CD4-positive, alpha-beta memory T cell (primary cell): ENCODE measurements at regions of chr3 and their contacts with region 1.

Region 1: DNA sequence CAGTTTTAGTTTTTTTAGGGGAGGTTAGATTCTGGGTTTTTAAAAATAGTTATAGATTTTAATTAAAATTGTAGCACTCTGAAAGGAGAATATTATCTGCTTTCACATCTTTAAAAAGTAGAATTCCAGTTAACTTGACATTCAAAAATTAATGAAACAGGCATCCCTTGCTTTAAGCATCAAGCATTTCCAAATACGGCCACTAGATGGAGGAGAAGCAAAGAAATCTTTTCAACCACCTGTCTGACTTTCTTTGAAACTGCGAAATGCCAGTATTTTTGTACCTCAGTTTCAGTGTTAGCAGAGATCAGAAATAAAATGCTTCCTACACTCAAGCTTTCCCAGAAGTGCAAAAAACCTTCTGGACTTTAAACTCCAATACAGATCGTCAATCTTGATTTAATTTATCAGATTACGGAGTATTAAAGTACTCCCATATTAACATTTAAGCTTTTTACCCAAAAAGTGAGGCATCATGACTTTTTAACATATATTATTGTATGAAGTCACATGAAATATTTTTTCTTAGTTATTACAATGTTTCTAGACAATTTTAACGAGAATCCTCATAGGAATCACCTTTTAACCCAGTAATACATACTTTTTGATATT is 153.3 kb downstream of the P3H2 start:
- DNase-seq: peak in 4 of 5 donors; percentile 16 to 43 (median 34)
- H3K4me3 ChIP-seq: no peak overlapping the region
- H3K4me3 Mint-ChIP-seq: no peak overlapping the region
- H3K27ac ChIP-seq: no peak overlapping the region
- H3K27ac Mint-ChIP-seq: no peak overlapping the region
- H3K4me1 ChIP-seq: no peaks in the 10 kb centered on the region
- H3K4me1 Mint-ChIP-seq: peaks cover 0 to 2% (median 0%) of the 10 kb centered on the region in 4 donors
- H3K27me3 ChIP-seq: no peaks in the 10 kb centered on the region
- H3K27me3 Mint-ChIP-seq: peaks cover 0 to 4% of the 10 kb centered on the region in 2 donors

Region 2: DNA sequence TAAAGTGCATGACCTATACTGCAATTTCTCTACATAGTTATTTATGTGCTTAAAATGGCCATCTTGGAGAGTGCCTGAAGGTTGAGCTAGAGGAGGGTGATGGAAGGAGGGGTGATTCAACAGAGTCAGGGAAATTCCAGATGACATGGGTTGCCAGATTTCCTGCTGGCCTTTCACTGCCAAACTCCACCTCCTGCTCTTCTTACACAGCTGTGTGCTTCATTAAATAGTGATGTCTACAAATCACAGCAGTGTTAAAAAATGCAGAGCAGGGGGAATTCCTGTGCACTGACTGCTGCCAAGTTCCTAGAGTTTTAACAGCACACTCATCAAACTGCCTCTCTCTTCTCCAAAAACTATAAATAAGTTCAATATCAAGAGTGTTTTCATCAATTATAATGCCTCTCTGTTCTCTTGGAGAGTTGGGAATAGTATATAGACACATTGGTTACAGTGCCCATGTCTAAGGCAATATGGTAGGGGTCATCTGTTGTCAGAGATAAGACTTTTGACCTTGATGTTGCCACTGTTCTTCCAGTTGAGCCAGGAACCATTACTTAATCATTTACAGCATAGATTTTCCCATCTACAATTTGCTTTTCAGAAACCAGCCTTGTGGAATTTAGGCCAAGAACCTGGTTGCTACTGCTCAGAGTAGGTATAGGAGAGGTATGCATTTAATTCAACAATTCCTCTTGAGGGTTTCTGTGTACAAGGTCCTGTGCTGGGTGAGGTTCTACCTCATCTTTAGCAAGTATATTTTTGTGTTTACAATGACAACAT is 256.5 kb before region 1 on chr3:
- CTCF ChIA-PET with region 1: no interaction called
- POLR2A ChIA-PET with region 1: no interaction called
- intact Hi-C with region 1: no loop called
- DNase-seq: no peak
- H3K4me3 ChIP-seq: no peak overlapping the region
- H3K4me3 Mint-ChIP-seq: no peak overlapping the region
- H3K27ac ChIP-seq: no peak overlapping the region
- H3K27ac Mint-ChIP-seq: no peak overlapping the region
- H3K4me1 ChIP-seq: peaks cover 14% of the 10 kb centered on the region
- H3K4me1 Mint-ChIP-seq: peaks cover 12 to 19% (median 17%) of the 10 kb centered on the region in 4 donors
- H3K27me3 ChIP-seq: no peaks in the 10 kb centered on the region
- H3K27me3 Mint-ChIP-seq: no peaks in the 10 kb centered on the region

Region 3: GRCh38 chr3:189797103-189797750 is 170.1 kb before region 1 on chr3:
- CTCF ChIA-PET with region 1: no interaction called
- POLR2A ChIA-PET with region 1: no interaction called
- intact Hi-C with region 1: no loop called
- DNase-seq: no peak
- H3K4me3 ChIP-seq: no peak overlapping the region
- H3K4me3 Mint-ChIP-seq: no peak overlapping the region
- H3K27ac ChIP-seq: no peak overlapping the region
- H3K27ac Mint-ChIP-seq: no peak overlapping the region
- H3K4me1 ChIP-seq: no peaks in the 10 kb centered on the region
- H3K4me1 Mint-ChIP-seq: peaks cover 0 to 4% (median 0%) of the 10 kb centered on the region in 4 donors
- H3K27me3 ChIP-seq: no peaks in the 10 kb centered on the region
- H3K27me3 Mint-ChIP-seq: peaks cover 0 to 1% of the 10 kb centered on the region in 2 donors

Region 4: DNA sequence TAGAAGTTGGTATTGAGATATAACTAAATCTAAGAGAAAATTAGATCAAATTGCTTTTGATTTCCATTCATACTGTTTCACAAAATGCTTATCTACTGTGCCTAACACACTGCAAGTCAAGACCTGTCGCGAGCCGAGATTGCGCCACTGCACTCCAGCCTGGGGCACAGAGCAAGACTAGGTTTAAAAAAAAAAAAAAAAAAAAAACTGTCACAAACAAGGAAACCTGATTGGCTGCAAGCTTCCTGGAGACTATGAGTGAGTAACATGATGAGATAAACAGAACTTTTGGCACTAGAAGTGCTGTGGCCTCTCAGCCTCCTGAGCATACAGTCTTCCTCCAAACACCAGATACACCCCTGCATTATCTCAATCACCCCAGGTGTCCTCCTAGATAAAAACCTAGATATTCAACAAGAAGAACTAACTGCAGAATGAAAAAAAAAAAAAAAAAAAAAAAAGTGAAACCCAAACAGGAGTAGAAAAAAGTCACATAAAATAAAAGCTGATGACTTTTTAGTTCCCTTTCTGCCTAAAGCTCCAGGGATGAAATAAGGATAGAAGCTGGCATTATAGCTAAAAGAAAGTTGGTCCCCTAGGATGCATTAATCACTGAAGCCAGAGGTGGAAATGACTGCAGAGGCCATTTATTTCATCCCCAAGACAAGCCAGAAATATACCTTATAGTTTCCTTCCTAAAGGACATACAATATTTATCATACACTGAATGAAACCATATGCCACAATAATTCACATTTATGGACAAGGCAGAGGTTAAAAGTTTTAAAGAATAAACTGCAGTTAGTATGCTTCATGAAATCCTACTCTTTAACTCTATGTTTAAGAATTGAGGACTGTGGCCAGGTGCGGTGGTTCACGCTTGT is 70.9 kb after region 1 on chr3:
- CTCF ChIA-PET with region 1: no interaction called
- POLR2A ChIA-PET with region 1: no interaction called
- intact Hi-C with region 1: no loop called
- DNase-seq: no peak
- H3K4me3 ChIP-seq: no peak overlapping the region
- H3K4me3 Mint-ChIP-seq: no peak overlapping the region
- H3K27ac ChIP-seq: no peak overlapping the region
- H3K27ac Mint-ChIP-seq: no peak overlapping the region
- H3K4me1 ChIP-seq: no peaks in the 10 kb centered on the region
- H3K4me1 Mint-ChIP-seq: no peaks in the 10 kb centered on the region
- H3K27me3 ChIP-seq: no peaks in the 10 kb centered on the region
- H3K27me3 Mint-ChIP-seq: peaks cover 6% of the 10 kb centered on the region in 2 donors

Region 5: DNA sequence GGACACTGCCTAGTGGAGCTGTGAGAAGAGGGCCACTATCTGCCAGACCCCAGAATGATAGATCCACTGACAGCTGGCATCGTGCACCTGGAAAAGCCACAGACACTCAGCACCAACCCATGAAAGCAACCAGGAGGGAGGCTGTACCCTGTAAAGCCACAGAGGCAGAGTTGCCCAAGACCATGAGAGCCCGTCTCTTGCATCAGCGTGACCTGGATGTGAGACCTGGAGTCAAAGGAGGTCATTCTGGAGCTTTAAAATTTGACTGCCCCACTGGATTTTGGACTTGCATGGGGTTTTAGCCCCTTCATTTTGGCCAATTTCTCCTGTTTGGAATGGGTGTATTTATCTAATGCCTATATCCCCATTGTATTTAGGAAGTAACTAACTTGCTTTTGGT is 236.8 kb after region 1 on chr3:
- CTCF ChIA-PET with region 1: interaction called, 3 read pairs
- POLR2A ChIA-PET with region 1: no interaction called
- intact Hi-C with region 1: loop called (anchors 5 kb)
- DNase-seq: no peak
- H3K4me3 ChIP-seq: no peak overlapping the region
- H3K4me3 Mint-ChIP-seq: no peak overlapping the region
- H3K27ac ChIP-seq: no peak overlapping the region
- H3K27ac Mint-ChIP-seq: no peak overlapping the region
- H3K4me1 ChIP-seq: no peaks in the 10 kb centered on the region
- H3K4me1 Mint-ChIP-seq: peaks cover 0 to 1% (median 0%) of the 10 kb centered on the region in 4 donors
- H3K27me3 ChIP-seq: no peaks in the 10 kb centered on the region
- H3K27me3 Mint-ChIP-seq: peaks cover 5 to 9% of the 10 kb centered on the region in 2 donors

Region 6: DNA sequence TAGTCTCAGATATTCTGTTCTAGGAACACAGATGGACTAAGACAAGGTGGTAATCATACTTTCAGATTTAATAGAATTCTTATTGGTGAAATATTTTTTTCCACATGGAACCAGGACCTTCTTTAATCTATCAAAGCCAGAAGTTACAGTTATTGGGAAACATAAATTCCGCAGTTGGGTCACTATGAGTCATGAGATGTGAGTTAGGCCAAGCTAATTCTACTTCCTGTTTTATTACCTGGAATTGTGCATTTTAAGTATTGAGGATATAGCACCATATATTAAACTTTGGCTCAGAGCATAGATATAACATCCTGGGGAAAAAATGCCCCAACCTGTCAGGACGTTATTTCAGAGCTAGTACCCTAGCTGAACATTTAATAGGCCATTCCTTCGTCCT is 249.7 kb after region 1 on chr3:
- CTCF ChIA-PET with region 1: no interaction called
- POLR2A ChIA-PET with region 1: no interaction called
- intact Hi-C with region 1: no loop called
- DNase-seq: no peak
- H3K4me3 ChIP-seq: no peak overlapping the region
- H3K4me3 Mint-ChIP-seq: no peak overlapping the region
- H3K27ac ChIP-seq: no peak overlapping the region
- H3K27ac Mint-ChIP-seq: no peak overlapping the region
- H3K4me1 ChIP-seq: no peaks in the 10 kb centered on the region
- H3K4me1 Mint-ChIP-seq: no peaks in the 10 kb centered on the region
- H3K27me3 ChIP-seq: no peaks in the 10 kb centered on the region
- H3K27me3 Mint-ChIP-seq: peaks cover 0 to 1% of the 10 kb centered on the region in 2 donors

Region 7: DNA sequence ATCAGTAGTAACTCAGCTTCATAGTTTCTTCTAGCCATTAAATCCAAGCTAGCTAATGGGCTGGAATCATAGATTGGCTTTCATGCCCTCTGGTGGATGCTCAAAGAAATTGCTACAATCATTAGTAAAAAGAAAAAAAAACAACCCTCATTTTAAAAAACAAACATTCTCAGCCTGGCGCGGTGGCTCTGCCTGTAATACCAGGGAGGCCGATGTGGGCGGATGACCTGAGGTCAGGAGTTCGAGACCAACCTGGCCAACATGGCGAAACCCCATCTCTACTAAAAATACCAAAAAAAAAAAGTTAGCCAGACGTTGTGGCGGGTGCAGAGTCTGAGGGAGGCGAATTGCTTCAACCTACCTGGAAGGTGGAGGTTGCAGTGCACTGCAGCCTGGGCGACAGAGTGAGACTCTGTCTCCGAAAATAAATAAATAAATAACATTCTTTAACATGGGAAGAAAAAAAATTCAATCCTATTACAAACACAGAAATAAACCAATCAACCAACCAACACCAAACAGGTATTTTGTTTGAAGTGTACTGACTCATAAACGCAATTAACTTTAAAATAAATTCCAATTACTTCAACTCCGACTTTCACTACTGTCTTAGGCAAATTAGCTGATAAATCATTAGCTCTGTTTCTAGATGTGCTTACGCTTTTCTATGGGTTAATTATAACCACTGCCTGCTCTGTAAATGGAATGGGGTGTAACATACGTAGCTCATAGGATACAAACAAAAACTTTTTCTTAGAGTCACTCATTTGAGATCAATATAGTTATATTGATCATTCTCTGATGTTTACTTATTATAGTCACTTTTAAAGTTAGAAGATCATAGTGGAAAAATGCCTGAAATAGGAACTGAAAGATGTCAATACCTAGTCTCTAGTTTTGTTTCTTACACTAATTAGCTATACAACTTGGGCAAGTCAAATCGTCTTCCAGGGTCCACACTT is 457.4 kb after region 1 on chr3:
- CTCF ChIA-PET with region 1: interaction called, 4 read pairs
- POLR2A ChIA-PET with region 1: no interaction called
- intact Hi-C with region 1: loop called (anchors 1 kb)
- DNase-seq: peak in 4 of 5 donors; percentile 31 to 44 (median 38)
- H3K4me3 ChIP-seq: no peak overlapping the region
- H3K4me3 Mint-ChIP-seq: peak overlapping the region; percentile 52 to 75 (median 70)
- H3K27ac ChIP-seq: no peak overlapping the region
- H3K27ac Mint-ChIP-seq: peak overlapping the region; percentile 18 to 89 (median 78)
- H3K4me1 ChIP-seq: no peaks in the 10 kb centered on the region
- H3K4me1 Mint-ChIP-seq: peaks cover 6 to 8% (median 7%) of the 10 kb centered on the region in 4 donors
- H3K27me3 ChIP-seq: no peaks in the 10 kb centered on the region
- H3K27me3 Mint-ChIP-seq: no peaks in the 10 kb centered on the region

Region 8: GRCh38 chr3:190696777-190697501 is 729.6 kb after region 1 on chr3:
- CTCF ChIA-PET with region 1: no interaction called
- POLR2A ChIA-PET with region 1: no interaction called
- intact Hi-C with region 1: loop called (anchors 2 kb)
- DNase-seq: no peak
- H3K4me3 ChIP-seq: no peak overlapping the region
- H3K4me3 Mint-ChIP-seq: no peak overlapping the region
- H3K27ac ChIP-seq: no peak overlapping the region
- H3K27ac Mint-ChIP-seq: no peak overlapping the region
- H3K4me1 ChIP-seq: no peaks in the 10 kb centered on the region
- H3K4me1 Mint-ChIP-seq: no peaks in the 10 kb centered on the region
- H3K27me3 ChIP-seq: no peaks in the 10 kb centered on the region
- H3K27me3 Mint-ChIP-seq: peaks cover 7 to 8% of the 10 kb centered on the region in 2 donors